Breast epithelium (tissue), 4 donors: ENCODE measurements at regions of chr2 and their contacts with region 1.

Region 1: DNA sequence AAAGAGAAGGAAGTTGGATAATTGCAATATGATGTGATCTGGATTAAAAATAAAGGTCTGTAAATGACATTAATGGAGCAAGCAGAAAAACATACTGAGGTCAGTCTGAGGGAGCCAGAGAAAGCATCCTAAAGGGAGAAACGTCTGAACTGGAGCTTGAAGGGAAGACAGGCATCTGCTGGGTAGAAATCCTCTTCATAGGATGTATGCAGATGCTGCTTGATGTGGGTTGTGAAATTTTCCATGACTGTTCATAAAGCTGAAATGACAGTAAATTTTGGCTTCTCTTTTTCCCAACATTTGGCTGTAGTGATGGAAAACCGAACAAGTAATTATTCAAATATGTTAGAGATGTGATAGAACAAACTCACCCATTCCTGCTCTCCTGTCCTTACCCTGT is 287.6 kb downstream of the CAMKMT start:
- DNase-seq: no peak
- H3K4me3 ChIP-seq: no peak overlapping the region
- H3K27ac ChIP-seq: no peak overlapping the region
- H3K4me1 ChIP-seq: no peaks in the 10 kb centered on the region
- H3K27me3 ChIP-seq: no peaks in the 10 kb centered on the region
- CTCF ChIP-seq: no peak
- POLR2A ChIP-seq: no peak

Region 2: DNA sequence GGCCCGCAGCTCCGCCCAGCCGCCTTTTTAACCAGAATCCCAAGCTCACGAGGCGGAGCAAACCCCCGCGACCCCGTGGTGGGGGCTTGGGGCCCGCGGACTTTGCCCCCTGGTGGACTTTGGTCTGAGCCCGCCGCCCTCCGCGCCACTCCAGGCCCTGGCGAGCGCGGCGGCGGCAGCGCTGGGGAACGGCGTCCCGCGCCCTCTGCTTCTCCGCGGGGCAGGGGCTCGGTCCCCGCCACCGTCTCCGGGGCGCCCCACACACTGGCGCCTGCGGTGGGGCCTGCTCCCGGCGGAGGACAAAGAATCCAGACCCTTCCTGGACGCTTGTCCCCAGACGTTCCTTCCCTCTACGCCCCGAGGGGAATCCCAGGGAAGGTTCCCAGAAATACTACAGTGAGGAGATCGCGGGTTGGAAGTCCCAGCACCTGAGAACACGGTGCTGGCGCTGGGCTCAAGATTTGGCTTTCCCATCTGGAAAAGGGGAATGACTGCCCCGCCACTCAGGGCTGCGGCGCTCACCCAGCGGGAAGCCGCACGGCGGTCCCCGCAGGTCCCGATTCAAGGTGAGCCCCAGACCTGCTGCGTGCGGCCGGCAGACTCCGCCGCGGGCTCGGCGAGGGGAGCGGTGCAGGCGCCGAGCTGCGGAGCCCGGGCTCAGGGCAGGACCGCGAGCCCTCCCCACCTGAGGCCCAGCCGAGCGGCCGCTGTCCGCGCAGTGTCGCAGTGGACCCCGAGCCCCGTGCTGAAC is 1856.6 kb before region 1 on chr2 and contains the start of gene HAAO:
- intact Hi-C with region 1: no loop called
- DNase-seq: peak in 1 of 2 donors; percentile 29
- H3K4me3 ChIP-seq: peak within 1 kb of the TSS; percentile 58 to 67 (median 66)
- H3K27ac ChIP-seq: peak within 1 kb of the TSS; percentile 89 to 91
- H3K4me1 ChIP-seq: peaks cover 0 to 3% of the 10 kb centered on the region in 2 donors
- H3K27me3 ChIP-seq: no peaks in the 10 kb centered on the region
- CTCF ChIP-seq: peak in 1 of 3 donors; percentile 13
- POLR2A ChIP-seq: no peak
- total RNA-seq, gene HAAO: 4.4 to 6.2 (median 5.9) TPM

Region 3: GRCh38 chr2:43810452-43810851 is 838.9 kb before region 1 on chr2:
- intact Hi-C with region 1: no loop called
- DNase-seq: no peak
- H3K4me3 ChIP-seq: no peak overlapping the region
- H3K27ac ChIP-seq: no peak overlapping the region
- H3K4me1 ChIP-seq: no peaks in the 10 kb centered on the region
- H3K27me3 ChIP-seq: no peaks in the 10 kb centered on the region
- CTCF ChIP-seq: no peak
- POLR2A ChIP-seq: no peak

Region 4: GRCh38 chr2:44596537-44597320 is 52.7 kb before region 1 on chr2:
- intact Hi-C with region 1: loop called (anchors 2 kb)
- DNase-seq: no peak
- H3K4me3 ChIP-seq: no peak overlapping the region
- H3K27ac ChIP-seq: no peak overlapping the region
- H3K4me1 ChIP-seq: no peaks in the 10 kb centered on the region
- H3K27me3 ChIP-seq: no peaks in the 10 kb centered on the region
- CTCF ChIP-seq: no peak
- POLR2A ChIP-seq: no peak

Region 5: GRCh38 chr2:44731505-44731904 is 82.1 kb after region 1 on chr2:
- intact Hi-C with region 1: no loop called
- DNase-seq: no peak
- H3K4me3 ChIP-seq: no peak overlapping the region
- H3K27ac ChIP-seq: no peak overlapping the region
- H3K4me1 ChIP-seq: no peaks in the 10 kb centered on the region
- H3K27me3 ChIP-seq: no peaks in the 10 kb centered on the region
- CTCF ChIP-seq: no peak
- POLR2A ChIP-seq: no peak